ENCODE measurements at regions of chr7 and their contacts with region 1.

Region 1: DNA sequence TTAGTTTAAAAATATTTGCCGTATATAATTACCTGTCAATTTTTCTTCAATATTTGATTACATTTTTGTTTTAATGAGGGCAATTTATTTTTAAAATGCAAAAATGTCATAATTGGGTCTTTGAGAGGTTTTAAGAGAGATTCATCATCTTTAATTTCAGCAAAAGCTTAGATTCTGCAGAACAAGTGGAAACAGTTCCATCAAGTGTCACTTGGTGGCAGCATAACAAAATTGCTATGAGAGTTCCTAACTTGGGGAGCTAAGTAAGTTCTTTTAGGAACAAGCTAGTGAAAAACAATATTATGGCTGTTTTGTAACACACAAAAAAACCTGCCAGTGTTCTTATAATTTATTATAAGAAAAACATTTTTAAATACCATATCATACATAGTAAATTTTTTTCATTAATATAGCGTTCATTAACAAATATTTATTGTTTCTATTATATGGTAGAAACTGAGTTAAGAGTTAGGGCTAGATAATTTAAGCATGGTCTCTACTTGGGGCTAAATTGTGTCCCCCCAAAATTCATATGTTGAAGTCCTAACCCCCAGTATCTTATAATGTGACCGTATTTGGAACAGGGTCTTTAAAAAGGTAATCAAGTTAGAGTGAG is 155.2 kb downstream of the MAGI2 start:
- DNase-seq: peak in 4 of 10 donors; percentile 18 to 50 (median 22)

Region 2: GRCh38 chr7:79452032-79452494 is 153.8 kb after region 1 on chr7:
- intact Hi-C with region 1: loop called (anchors 5 kb)
- DNase-seq: peak; percentile 82 to 98 (median 92)

Region 3: GRCh38 chr7:79495544-79496272 is 197.5 kb after region 1 on chr7:
- intact Hi-C with region 1: no loop called
- DNase-seq: no peak

Region 4: DNA sequence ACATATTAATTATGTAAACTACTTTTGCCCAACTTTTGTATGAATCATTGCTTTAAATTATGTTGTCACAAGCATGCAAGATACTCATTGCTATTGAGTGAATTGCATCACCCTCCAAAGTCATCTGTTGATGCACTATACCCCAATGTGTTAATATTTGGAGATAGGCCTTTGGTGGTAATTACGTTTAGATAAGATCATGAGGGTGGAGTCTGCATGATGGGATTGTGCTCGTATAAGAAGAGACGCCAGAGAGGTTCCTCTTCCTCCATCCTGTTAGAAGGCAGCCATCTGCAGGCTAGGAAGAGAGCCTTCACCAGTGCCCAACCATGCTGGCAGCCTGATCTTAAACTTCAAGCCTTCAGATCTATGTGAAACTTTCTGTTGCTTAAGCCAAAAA is 250.5 kb after region 1 on chr7:
- intact Hi-C with region 1: loop called (anchors 5 kb)
- DNase-seq: peak in 3 of 10 donors; percentile 13 to 74 (median 43)

Region 5: GRCh38 chr7:80018941-80019752 is 720.9 kb after region 1 on chr7:
- intact Hi-C with region 1: loop called (anchors 2 kb)
- DNase-seq: peak in 8 of 10 donors; percentile 12 to 88 (median 40)

Measured in posterior cingulate gyrus (tissue), 11 donors.